ENCODE measurements at regions of chr5 and their contacts with region 1.

Region 1: DNA sequence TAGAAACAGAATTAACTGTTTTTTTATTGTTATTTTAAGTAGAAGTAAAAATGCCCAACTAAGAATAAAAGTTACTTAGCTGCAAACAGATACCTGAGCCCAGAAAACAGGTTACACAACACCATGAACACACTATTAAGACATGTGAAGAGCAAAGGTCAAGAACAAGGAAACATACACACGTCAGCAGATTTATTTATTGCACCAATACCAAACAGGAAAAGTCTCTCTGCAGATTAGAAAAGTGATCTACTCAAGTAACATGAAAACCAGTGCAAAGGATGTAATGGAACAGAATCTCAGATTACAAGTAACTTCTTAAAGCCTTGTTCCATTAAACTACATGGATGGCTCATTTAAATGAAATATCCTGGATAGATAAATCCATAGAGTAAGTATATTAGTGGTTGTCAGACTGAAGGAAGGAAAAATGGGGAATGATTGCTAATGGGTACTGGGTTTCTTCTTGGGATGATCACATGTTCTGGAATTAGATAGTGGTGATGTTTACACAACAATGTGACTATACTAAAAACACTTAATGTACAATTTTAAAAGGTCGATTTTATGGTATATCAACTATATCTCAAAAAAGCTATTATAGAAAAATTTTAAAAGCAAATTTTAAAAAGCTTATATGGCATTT is 6.1 kb downstream of the SAR1B start:
- DNase-seq: peak in 1 of 2 donors; percentile 20
- ATAC-seq: peak; percentile 94 to 95
- H3K4me3 ChIP-seq: no peak overlapping the region
- H3K27ac ChIP-seq: peak overlapping the region; percentile 94 to 97 (median 96)
- H3K4me1 ChIP-seq: peaks cover 39 to 46% of the 10 kb centered on the region in 2 donors
- H3K27me3 ChIP-seq: no peaks in the 10 kb centered on the region
- CTCF ChIP-seq: no peak
- POLR2A ChIP-seq: no peak

Region 2: GRCh38 chr5:134592141-134592746 is 34.2 kb before region 1 on chr5:
- in situ Hi-C with region 1: no loop called
- intact Hi-C with region 1: loop called (anchors 2 kb)
- DNase-seq: peak; percentile 79 to 82
- ATAC-seq: peak; percentile 82 to 86
- H3K4me3 ChIP-seq: no peak overlapping the region
- H3K27ac ChIP-seq: peak overlapping the region; percentile 81 to 94 (median 92)
- H3K4me1 ChIP-seq: peaks cover 44 to 56% of the 10 kb centered on the region in 2 donors
- H3K27me3 ChIP-seq: no peaks in the 10 kb centered on the region
- CTCF ChIP-seq: no peak
- POLR2A ChIP-seq: peak in 1 of 2 donors; percentile 19

Region 3: GRCh38 chr5:134833340-134834032 is 207.0 kb after region 1 on chr5:
- in situ Hi-C with region 1: no loop called
- intact Hi-C with region 1: no loop called
- DNase-seq: no peak
- ATAC-seq: no peak
- H3K4me3 ChIP-seq: no peak overlapping the region
- H3K27ac ChIP-seq: no peak overlapping the region
- H3K4me1 ChIP-seq: peaks cover 0 to 3% of the 10 kb centered on the region in 2 donors
- H3K27me3 ChIP-seq: no peaks in the 10 kb centered on the region
- CTCF ChIP-seq: no peak
- POLR2A ChIP-seq: no peak